ENCODE measurements at regions of chr12 and their contacts with region 1.

Region 1: GRCh38 chr12:15856097-15856982 is 25.8 kb upstream of the STRAP start:
- DNase-seq: peak; percentile 40
- ATAC-seq: peak; percentile 84
- H3K4me3 ChIP-seq: no peak overlapping the region
- H3K27ac ChIP-seq: no peak overlapping the region
- H3K4me1 ChIP-seq: no peaks in the 10 kb centered on the region
- H3K27me3 ChIP-seq: no peaks in the 10 kb centered on the region
- CTCF ChIP-seq: peak; percentile 59 to 82 (median 60); a peak in 4 of 6 replicates
- EP300 ChIP-seq: no peak
- POLR2A ChIP-seq: no peak
- RAD21 ChIP-seq: peak; percentile 98

Region 2: GRCh38 chr12:15590180-15590826 is 266.0 kb before region 1 on chr12:
- CTCF ChIA-PET with region 1: interaction called, 478 read pairs
- POLR2A ChIA-PET with region 1: interaction called, 5 read pairs
- RAD21 ChIA-PET with region 1: interaction called, 215 read pairs
- SMC1A ChIA-PET with region 1: interaction called, 466 read pairs
- in situ Hi-C with region 1: loop called (anchors 5 kb)
- intact Hi-C with region 1: loop called (anchors 1 kb)
- DNase-seq: peak; percentile 46
- ATAC-seq: peak; percentile 97
- H3K4me3 ChIP-seq: peak overlapping the region; percentile 46; the same call in 1 of the 2 replicates
- H3K27ac ChIP-seq: no peak overlapping the region
- H3K4me1 ChIP-seq: peaks cover 4% of the 10 kb centered on the region; the same call in 1 of the 2 replicates
- H3K27me3 ChIP-seq: 0 out of 4 replicates have a peak, but pooled peaks cover 0 to 1% of the 10 kb centered on the region in 2 experiments
- CTCF ChIP-seq: peak; percentile 85 to 94 (median 86); a peak in 5 of 6 replicates
- EP300 ChIP-seq: no peak
- POLR2A ChIP-seq: no peak
- RAD21 ChIP-seq: peak; percentile 97

Region 3: DNA sequence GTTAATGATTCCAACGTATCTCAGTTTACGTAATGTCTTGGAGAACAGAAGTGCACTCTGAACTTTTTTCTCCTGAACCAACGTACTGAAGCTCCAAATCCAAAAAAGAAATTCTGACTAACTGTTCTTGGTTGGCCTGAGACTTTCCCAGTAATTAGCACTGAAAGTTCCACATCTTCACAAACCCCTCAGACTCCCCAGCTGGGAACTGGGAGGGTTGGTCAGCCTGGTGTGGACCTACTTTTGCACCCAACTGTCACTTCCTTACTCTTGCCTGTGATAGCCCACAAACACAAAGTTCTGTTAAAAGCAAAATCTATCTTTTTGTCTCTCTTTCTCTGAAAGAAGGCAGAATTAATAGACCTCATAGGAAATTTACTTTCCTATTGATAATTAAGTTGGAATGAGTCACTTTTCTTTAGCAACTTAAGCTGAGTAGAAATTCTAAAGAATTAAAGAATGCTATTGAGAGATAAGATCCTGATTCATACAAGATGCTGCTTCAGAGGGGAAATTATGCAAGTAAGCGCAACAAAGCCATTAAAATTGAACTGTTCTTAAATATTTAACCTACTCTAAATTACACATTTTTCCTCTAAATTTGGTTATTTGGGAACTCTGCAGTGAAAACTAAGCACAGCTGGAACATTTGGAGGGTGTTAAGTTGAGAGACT is 222.2 kb before region 1 on chr12:
- CTCF ChIA-PET with region 1: interaction called, 3 read pairs
- POLR2A ChIA-PET with region 1: interaction called, 4 read pairs
- RAD21 ChIA-PET with region 1: no interaction called
- SMC1A ChIA-PET with region 1: interaction called, 12 read pairs
- in situ Hi-C with region 1: no loop called
- intact Hi-C with region 1: no loop called
- DNase-seq: no peak
- ATAC-seq: no peak
- H3K4me3 ChIP-seq: no peak overlapping the region
- H3K27ac ChIP-seq: no peak overlapping the region
- H3K4me1 ChIP-seq: no peaks in the 10 kb centered on the region
- H3K27me3 ChIP-seq: no peaks in the 10 kb centered on the region
- CTCF ChIP-seq: no peak
- EP300 ChIP-seq: no peak
- POLR2A ChIP-seq: no peak
- RAD21 ChIP-seq: no peak

Region 4: GRCh38 chr12:15789220-15790171 is 66.8 kb before region 1 on chr12 and contains the start of gene EPS8:
- CTCF ChIA-PET with region 1: interaction called, 8 read pairs
- POLR2A ChIA-PET with region 1: no interaction called
- RAD21 ChIA-PET with region 1: interaction called, 7 read pairs
- SMC1A ChIA-PET with region 1: interaction called, 5 read pairs
- in situ Hi-C with region 1: no loop called
- intact Hi-C with region 1: loop called (anchors 5 kb)
- DNase-seq: peak; percentile 50
- ATAC-seq: peak; percentile 87
- H3K4me3 ChIP-seq: peak within 1 kb of the TSS; percentile 79
- H3K27ac ChIP-seq: no peak within 1 kb of the TSS
- H3K4me1 ChIP-seq: no peaks in the 10 kb centered on the region
- H3K27me3 ChIP-seq: peaks cover 0 to 8% of the 10 kb centered on the region in 2 experiments; a peak in 2 of 4 replicates
- CTCF ChIP-seq: no peak
- EP300 ChIP-seq: 0 out of 4 replicates have a peak, but pooled peaks of 1 of the 2 experiments have one; percentile 18
- POLR2A ChIP-seq: peak; percentile 61; the same call in 1 of the 2 replicates
- RAD21 ChIP-seq: no peak
- polyA plus RNA-seq, gene EPS8: 1.3 to 1.6 TPM

Region 5: DNA sequence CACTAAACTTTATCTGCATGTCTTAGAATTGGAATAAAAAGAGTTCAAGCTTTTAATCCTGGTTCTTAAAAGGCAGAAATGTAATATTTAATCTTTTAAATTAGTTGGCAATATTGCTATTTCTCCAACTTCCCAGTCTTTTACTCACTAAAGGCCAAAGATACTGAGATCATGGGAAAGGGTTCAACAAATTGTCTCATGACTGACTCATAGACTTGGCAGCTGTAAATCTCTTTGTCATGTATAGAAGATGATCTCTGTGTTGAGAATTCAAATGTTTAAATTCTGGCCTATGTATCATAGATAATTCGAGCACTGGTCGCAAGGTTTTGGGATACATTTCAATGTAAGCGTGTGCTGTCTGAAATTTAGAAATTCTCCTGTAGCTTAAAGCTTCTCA is 14.2 kb before region 1 on chr12:
- CTCF ChIA-PET with region 1: interaction called, 22 read pairs
- POLR2A ChIA-PET with region 1: interaction called, 3 read pairs
- RAD21 ChIA-PET with region 1: interaction called, 13 read pairs
- SMC1A ChIA-PET with region 1: interaction called, 14 read pairs
- in situ Hi-C with region 1: no loop called
- intact Hi-C with region 1: no loop called
- DNase-seq: no peak
- ATAC-seq: no peak
- H3K4me3 ChIP-seq: no peak overlapping the region
- H3K27ac ChIP-seq: no peak overlapping the region
- H3K4me1 ChIP-seq: no peaks in the 10 kb centered on the region
- H3K27me3 ChIP-seq: no peaks in the 10 kb centered on the region; a peak in 1 of 4 replicates
- CTCF ChIP-seq: no peak
- EP300 ChIP-seq: no peak
- POLR2A ChIP-seq: no peak
- RAD21 ChIP-seq: no peak

Region 6: DNA sequence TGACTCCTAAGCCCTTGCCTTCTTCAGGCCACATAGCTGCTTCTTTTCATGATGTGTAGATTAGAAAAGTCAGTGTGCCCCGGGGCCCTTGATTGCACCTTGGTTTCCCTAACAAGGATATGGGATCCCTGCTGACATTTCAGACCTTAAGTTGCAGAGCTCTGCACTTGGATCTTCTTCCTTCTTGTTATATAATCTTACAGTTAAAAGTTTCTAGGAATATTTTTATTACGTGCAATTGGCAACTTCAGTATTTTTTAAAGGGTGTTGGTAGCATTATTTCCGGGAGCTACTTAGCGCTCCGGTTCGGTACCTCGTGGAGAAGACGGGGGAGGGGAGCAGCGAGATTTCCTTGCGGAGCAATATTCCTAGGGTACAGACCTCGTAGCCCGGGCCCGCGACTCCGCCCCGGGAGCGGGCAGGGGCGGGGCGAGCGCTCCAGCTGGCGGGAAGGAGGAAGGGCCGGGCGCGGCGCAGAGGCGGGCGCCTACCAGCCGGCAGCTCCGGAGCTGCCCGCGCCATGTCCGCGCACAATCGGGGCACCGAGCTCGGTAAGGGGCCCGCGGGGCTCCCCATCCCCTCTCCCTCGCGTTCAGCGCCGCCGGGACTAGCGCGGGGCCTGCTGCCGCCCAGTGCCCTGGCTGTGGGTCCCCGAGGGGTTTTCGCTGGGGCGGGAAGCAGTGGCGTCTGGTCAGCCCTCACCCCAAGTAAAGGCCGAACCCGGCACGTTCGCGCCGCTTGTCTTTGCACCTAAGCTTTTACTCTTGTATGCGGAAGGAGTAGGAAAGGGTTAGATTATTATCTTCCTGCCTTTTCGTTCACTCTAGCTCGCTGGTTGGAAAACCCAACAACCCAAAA is 54.8 kb after region 1 on chr12 and contains the start of gene DERA:
- CTCF ChIA-PET with region 1: interaction called, 20 read pairs
- POLR2A ChIA-PET with region 1: no interaction called
- RAD21 ChIA-PET with region 1: no interaction called
- SMC1A ChIA-PET with region 1: interaction called, 16 read pairs
- in situ Hi-C with region 1: no loop called
- intact Hi-C with region 1: no loop called
- DNase-seq: no peak
- ATAC-seq: peak; percentile 94
- H3K4me3 ChIP-seq: peak within 1 kb of the TSS; percentile 73
- H3K27ac ChIP-seq: peak within 1 kb of the TSS; percentile 88
- H3K4me1 ChIP-seq: no peaks in the 10 kb centered on the region
- H3K27me3 ChIP-seq: no peaks in the 10 kb centered on the region
- CTCF ChIP-seq: no peak
- EP300 ChIP-seq: no peak
- POLR2A ChIP-seq: peak; percentile 88
- RAD21 ChIP-seq: no peak
- polyA plus RNA-seq, gene DERA: 64.2 to 97.1 TPM

Measured in GM12878 (cell line).